ENCODE measurements at regions of chr17 and their contacts with region 1.

Region 1: GRCh38 chr17:45148183-45149036 is at the start of gene HEXIM1:
- DNase-seq: peak; percentile 99
- ATAC-seq: peak; percentile 76
- H3K4me3 Mint-ChIP-seq: peak within 1 kb of the TSS; percentile 99
- H3K27ac Mint-ChIP-seq: peak within 1 kb of the TSS; percentile 100
- H3K4me1 Mint-ChIP-seq: peaks cover 43% of the 10 kb centered on the region
- H3K27me3 Mint-ChIP-seq: peaks cover 2% of the 10 kb centered on the region
- total RNA-seq, gene HEXIM1: 40.2 to 42.4 TPM

Region 2: GRCh38 chr17:45161019-45161825 is 12.8 kb after region 1 on chr17:
- CTCF ChIA-PET with region 1: interaction called, 245 read pairs
- DNase-seq: peak; percentile 99
- ATAC-seq: peak; percentile 96
- H3K4me3 Mint-ChIP-seq: peak overlapping the region; percentile 98
- H3K27ac Mint-ChIP-seq: peak overlapping the region; percentile 99
- H3K4me1 Mint-ChIP-seq: peaks cover 41% of the 10 kb centered on the region
- H3K27me3 Mint-ChIP-seq: no peaks in the 10 kb centered on the region

Region 3: DNA sequence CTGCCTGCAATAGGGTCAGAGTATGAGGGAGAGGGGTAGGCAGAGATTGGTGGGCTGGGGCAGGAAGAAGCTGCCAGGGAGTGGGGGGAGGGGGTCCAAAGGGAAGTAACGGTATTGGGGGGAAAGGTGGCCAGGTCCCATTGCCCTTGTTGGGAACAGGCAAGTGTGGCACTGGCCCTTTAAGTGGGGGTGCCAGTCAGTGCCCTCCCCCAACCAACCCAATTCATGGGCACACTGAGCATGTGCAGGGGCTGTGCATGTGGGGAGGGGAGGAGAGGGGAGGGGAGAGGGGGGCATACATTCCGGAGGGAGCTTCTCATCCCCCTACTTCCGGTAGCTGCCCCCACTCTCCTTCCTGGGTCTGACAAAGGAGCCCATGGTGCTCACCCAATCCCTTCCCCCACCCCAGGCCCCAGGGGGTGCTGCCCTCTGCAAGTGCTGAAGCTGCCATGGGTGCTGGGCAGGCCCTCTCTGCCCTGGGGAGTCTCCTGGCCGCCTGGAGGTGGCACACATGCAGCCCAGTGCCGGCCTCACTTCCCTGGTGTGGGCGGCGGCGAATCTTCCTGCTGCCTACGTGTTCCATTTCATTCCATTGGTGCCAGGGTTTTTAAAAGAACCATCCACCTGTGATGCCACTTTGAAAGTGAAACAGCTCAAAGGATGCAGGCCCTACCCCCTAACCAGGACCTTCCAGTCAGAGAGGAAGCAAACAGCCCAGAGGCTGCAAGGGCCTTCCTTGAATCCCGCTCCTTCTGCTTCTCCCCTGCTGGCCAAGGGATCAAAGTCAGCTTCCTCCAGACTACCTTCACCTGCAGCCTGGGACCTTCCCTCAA is 24.3 kb after region 1 on chr17:
- CTCF ChIA-PET with region 1: interaction called, 245 read pairs
- DNase-seq: peak; percentile 62
- ATAC-seq: peak; percentile 68
- H3K4me3 Mint-ChIP-seq: peak overlapping the region; percentile 48
- H3K27ac Mint-ChIP-seq: peak overlapping the region; percentile 89
- H3K4me1 Mint-ChIP-seq: peaks cover 21% of the 10 kb centered on the region
- H3K27me3 Mint-ChIP-seq: no peaks in the 10 kb centered on the region

Region 4: GRCh38 chr17:45197555-45198334 is 49.3 kb after region 1 on chr17:
- CTCF ChIA-PET with region 1: interaction called, 139 read pairs
- DNase-seq: peak; percentile 90
- ATAC-seq: peak; percentile 100
- H3K4me3 Mint-ChIP-seq: no peak overlapping the region
- H3K27ac Mint-ChIP-seq: peak overlapping the region; percentile 19
- H3K4me1 Mint-ChIP-seq: peaks cover 6% of the 10 kb centered on the region
- H3K27me3 Mint-ChIP-seq: no peaks in the 10 kb centered on the region

Region 5: GRCh38 chr17:45228763-45229539 is 80.5 kb after region 1 on chr17:
- CTCF ChIA-PET with region 1: interaction called, 59 read pairs
- DNase-seq: peak; percentile 93
- ATAC-seq: peak; percentile 47
- H3K4me3 Mint-ChIP-seq: peak overlapping the region; percentile 93
- H3K27ac Mint-ChIP-seq: peak overlapping the region; percentile 100
- H3K4me1 Mint-ChIP-seq: peaks cover 74% of the 10 kb centered on the region
- H3K27me3 Mint-ChIP-seq: no peaks in the 10 kb centered on the region

Region 6: DNA sequence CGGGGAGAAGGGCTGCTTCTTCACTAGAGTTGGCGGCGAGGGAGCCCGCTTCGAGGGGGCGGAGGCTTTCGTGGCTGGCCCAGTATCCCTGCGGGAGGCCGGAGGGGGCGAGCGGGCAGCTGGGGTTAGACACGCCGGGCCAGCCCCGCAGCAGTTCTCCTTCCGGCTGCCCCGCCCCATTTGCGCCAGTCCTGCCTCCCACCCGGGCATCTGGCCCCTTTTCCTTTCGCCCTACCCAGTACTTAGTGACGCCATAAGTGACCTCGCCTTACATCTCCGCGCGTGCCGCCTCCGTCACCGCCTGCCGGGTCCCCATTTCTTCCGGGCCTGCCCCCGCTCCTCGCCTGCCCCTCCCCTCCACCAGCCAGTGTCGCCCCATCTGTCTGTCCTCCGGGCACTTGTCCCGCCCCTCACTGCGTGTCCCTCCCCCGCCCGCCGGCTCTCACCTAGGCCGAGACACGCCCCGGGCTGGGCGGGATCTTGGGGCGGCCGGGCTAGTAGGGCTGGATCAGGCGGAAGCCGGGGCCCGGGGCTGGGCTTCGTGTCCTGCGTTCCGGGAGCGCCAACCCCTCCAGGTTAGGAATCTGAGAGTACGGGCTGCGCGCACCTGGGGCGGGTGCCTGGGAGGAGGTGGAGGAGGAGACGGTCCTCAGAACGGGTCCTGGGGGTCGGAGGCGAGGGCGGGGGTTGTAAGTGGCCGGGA is 99.2 kb after region 1 on chr17:
- CTCF ChIA-PET with region 1: interaction called, 14 read pairs
- DNase-seq: peak; percentile 100
- ATAC-seq: peak; percentile 91
- H3K4me3 Mint-ChIP-seq: peak overlapping the region; percentile 82
- H3K27ac Mint-ChIP-seq: peak overlapping the region; percentile 96
- H3K4me1 Mint-ChIP-seq: peaks cover 60% of the 10 kb centered on the region
- H3K27me3 Mint-ChIP-seq: no peaks in the 10 kb centered on the region

Region 7: DNA sequence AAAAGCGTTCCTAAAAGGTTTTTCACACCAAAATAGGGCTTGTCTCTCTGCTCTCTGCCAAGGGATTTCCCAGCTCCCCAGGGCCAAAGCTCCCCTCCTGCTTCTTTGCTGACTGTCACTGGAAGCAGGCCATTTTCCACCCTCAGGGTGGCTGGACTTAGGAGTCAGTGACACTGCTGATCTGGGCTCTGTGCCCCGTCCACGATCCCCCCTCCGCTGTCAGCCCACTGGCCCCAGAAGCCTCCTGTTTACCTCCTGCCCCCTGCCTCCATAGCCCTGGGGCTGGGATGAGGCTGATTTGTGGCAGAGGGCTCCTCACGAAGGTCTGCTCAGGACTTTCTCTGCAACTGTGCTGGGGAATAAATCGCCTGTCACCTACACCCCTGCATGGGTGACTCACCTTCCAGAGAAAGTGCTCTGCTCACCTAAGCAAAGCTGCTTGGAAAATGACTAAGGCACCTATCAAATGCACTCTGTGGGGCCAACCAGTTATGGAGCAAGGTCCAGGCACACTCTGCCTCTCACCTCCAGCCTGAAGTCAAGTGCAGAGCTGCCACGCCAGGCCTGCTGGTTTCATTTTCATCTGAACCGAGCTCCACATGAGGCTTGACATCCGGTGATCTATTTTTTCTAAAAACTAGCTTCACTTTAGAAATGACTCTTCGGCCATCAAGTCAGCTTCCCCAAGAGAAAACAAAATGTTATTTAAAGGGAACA is 163.5 kb after region 1 on chr17:
- CTCF ChIA-PET with region 1: interaction called, 12 read pairs
- DNase-seq: peak; percentile 94
- ATAC-seq: peak; percentile 57
- H3K4me3 Mint-ChIP-seq: peak overlapping the region; percentile 97
- H3K27ac Mint-ChIP-seq: peak overlapping the region; percentile 90
- H3K4me1 Mint-ChIP-seq: peaks cover 70% of the 10 kb centered on the region
- H3K27me3 Mint-ChIP-seq: no peaks in the 10 kb centered on the region